Keratinocyte (primary cell): ENCODE measurements at regions of chr12 and their contacts with region 1.

Region 1: GRCh38 chr12:949453-950191 is at the start of gene RAD52:
- DNase-seq: peak; percentile 88
- H3K4me3 ChIP-seq: peak within 1 kb of the TSS; percentile 78 to 92 (median 87)
- H3K27ac ChIP-seq: peak within 1 kb of the TSS; percentile 86
- H3K4me1 ChIP-seq: peaks cover 17% of the 10 kb centered on the region
- H3K27me3 ChIP-seq: no peaks in the 10 kb centered on the region
- CTCF ChIP-seq: peak; percentile 80 to 96 (median 91)
- polyA plus RNA-seq, gene RAD52: 8.3 to 11.2 TPM (median 9.8 TPM) in 3 replicates

Region 2: GRCh38 chr12:538731-539539 is 410.7 kb before region 1 on chr12:
- dilution Hi-C with region 1: no loop called
- DNase-seq: no peak
- H3K4me3 ChIP-seq: no peak overlapping the region
- H3K27ac ChIP-seq: peak overlapping the region; percentile 59
- H3K4me1 ChIP-seq: peaks cover 27% of the 10 kb centered on the region
- H3K27me3 ChIP-seq: no peaks in the 10 kb centered on the region
- CTCF ChIP-seq: no peak

Region 3: GRCh38 chr12:789852-790563 is 159.6 kb before region 1 on chr12:
- dilution Hi-C with region 1: no loop called
- DNase-seq: no peak
- H3K4me3 ChIP-seq: no peak overlapping the region
- H3K27ac ChIP-seq: no peak overlapping the region
- H3K4me1 ChIP-seq: peaks cover 14% of the 10 kb centered on the region
- H3K27me3 ChIP-seq: no peaks in the 10 kb centered on the region
- CTCF ChIP-seq: no peak

Region 4: GRCh38 chr12:1073652-1074051 is 124.0 kb after region 1 on chr12:
- dilution Hi-C with region 1: loop called (anchors 10 kb)
- DNase-seq: no peak
- H3K4me3 ChIP-seq: no peak overlapping the region
- H3K27ac ChIP-seq: no peak overlapping the region
- H3K4me1 ChIP-seq: no peaks in the 10 kb centered on the region
- H3K27me3 ChIP-seq: no peaks in the 10 kb centered on the region
- CTCF ChIP-seq: no peak

Region 5: DNA sequence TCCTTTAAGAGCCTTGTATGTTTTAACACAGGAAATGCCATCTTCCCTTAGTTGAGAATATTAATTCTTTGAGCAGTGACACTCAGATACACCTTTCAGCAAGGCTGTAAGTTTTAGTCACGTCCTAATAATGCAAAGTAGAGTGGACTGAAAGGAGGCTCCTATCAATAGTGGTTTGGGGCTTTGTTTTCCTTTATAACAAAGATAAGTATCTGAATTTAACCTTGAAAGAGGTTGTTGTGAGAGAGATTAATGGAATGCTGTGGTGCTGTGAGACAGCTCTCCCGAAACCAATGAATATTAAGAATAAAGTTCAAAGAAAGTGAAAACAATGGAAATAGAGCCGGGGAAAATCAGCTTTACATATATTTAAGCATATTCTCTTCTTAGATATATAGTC is 301.0 kb after region 1 on chr12:
- dilution Hi-C with region 1: no loop called
- DNase-seq: no peak
- H3K4me3 ChIP-seq: no peak overlapping the region
- H3K27ac ChIP-seq: no peak overlapping the region
- H3K4me1 ChIP-seq: peaks cover 10% of the 10 kb centered on the region
- H3K27me3 ChIP-seq: no peaks in the 10 kb centered on the region
- CTCF ChIP-seq: no peak